ENCODE measurements at regions of chr5 and their contacts with region 1.

Region 1: GRCh38 chr5:95646554-95647431 is at the start of gene RFESD:
- DNase-seq: peak; percentile 93 to 99 (median 96)

Region 2: DNA sequence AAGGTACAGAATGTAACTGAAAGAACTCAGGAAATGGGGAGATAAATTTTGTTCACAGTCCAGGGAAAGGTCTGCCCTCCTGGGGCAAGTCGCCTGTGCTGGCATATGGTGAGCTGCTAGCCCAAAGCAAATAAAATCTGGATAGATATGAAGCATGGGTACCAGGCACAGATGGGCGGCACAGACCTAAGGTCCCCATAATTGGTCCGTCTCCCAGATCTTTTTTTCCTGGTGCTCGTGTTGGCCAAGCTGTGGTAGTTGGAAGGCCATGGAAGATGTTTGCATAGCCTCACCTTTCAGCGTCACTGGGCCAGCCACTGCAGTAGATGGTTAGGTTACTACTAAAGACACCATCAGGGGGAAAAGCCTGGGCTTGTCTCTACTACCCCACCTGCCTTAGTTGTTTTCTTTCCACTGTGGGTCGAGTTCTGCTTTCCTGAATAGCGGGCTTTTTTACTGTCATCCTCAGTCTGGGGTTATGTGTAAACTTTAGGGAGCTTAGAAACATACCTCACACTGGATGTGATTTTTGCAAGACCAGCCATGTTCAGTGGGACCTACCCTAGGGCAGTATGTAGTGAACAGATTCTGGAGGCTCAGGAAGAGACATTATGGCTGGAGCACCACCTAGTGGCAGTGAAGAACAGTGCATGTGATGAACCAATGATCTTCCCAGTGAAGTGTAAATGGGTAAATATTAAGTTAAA is 199.9 kb after region 1 on chr5:
- intact Hi-C with region 1: loop called (anchors 2 kb)
- DNase-seq: peak in 8 of 10 donors; percentile 38 to 94 (median 76)

Region 3: GRCh38 chr5:96336351-96336985 is 689.7 kb after region 1 on chr5:
- intact Hi-C with region 1: loop called (anchors 10 kb)
- DNase-seq: peak in 7 of 10 donors; percentile 15 to 86 (median 56)

Measured in posterior cingulate gyrus (tissue), 11 donors.